Activated CD4-positive, alpha-beta T cell treated with anti-CD3 and anti-CD28 coated beads for 36 hours (primary cell): ENCODE measurements at regions of chr17 and their contacts with region 1.

Region 1: DNA sequence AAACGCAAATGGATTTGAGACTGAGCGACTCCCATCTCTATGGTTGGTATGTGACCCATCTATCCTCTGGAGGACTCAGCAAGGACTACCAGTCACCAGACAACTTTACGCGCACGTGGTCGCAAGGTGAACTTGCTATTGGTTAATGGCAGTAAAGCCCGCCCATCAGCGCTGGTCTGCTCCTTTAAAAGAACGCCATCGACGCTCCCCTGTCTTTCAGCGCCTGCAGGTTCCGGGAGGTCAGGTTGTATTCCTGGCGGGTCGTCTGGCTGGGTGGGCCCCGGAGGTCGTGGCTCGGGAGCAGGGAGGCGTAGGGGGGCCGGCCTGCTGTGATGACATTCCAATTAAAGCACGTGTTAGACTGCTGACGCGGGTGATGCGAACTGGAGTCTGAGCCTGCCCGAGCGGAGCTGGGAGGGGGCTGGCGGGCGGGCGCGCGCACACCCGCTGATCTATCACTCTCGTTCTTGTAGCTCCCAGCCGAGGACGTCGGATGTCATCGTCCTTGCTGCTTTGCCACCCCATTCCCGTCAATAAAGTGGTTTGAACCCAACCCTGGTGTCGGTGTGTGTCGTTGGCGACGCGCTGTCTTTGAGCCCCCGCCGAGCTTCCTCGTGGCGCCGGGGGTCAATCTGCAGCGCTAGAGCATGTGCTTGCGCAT is 15.9 kb upstream of the ERN1 start:
- DNase-seq: peak; percentile 97
- ATAC-seq: peak; percentile 96
- H3K4me3 Mint-ChIP-seq: no peak overlapping the region
- H3K27ac Mint-ChIP-seq: no peak overlapping the region
- H3K4me1 Mint-ChIP-seq: peaks cover 24% of the 10 kb centered on the region
- H3K27me3 Mint-ChIP-seq: no peaks in the 10 kb centered on the region

Region 2: DNA sequence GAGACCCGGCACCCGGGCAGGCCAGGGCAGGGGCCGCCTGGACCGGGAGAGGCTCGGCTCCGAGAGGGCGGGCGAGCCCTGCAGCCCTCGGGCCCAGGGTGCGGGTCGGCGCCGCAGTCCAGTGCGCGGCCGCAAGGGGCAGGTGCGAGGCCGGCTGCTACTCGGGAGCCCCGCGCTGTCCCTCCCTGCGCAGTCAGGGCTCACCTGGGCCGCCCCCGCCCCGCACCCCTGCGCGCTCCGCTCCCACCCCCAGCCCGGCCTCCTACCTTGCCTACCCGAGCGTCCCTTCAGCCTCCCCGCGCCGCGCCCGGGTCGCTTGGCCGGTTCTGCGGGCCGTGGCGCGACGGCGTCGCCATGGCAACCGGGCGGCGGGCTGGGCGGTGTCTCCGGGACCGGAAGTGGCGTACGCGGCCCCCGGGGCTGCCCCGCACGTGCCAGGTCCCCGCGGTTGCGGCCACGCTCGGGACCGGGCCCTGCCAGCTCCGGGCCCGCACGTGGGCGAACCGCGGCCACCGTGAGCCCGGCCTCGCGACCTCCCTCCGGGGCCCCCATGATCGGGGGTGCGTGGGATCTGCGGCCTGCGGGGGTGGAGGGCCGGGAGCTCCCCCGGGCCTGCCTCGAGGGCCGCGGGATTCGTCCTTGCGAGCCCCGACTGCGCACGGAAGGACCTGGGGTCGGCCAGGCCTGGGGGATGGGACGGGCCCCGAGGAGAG is 699.8 kb before region 1 on chr17 and contains the start of gene CYB561:
- CTCF ChIA-PET with region 1: no interaction called
- POLR2A ChIA-PET with region 1: no interaction called
- intact Hi-C with region 1: loop called in 1 of 2 experiments (anchors 10 kb)
- DNase-seq: peak; percentile 81
- ATAC-seq: peak; percentile 69
- H3K4me3 Mint-ChIP-seq: peak within 1 kb of the TSS; percentile 60
- H3K27ac Mint-ChIP-seq: peak within 1 kb of the TSS; percentile 72
- H3K4me1 Mint-ChIP-seq: peaks cover 23% of the 10 kb centered on the region
- H3K27me3 Mint-ChIP-seq: peaks cover 3% of the 10 kb centered on the region
- total RNA-seq, gene CYB561: 2.5 to 3.0 TPM

Region 3: GRCh38 chr17:63773381-63774140 is 372.3 kb before region 1 on chr17 and contains the start of gene CCDC47:
- CTCF ChIA-PET with region 1: no interaction called
- POLR2A ChIA-PET with region 1: no interaction called
- intact Hi-C with region 1: loop called in 1 of 2 experiments (anchors 5 kb)
- DNase-seq: peak; percentile 99
- ATAC-seq: peak; percentile 83
- H3K4me3 Mint-ChIP-seq: peak within 1 kb of the TSS; percentile 98
- H3K27ac Mint-ChIP-seq: peak within 1 kb of the TSS; percentile 97
- H3K4me1 Mint-ChIP-seq: peaks cover 57% of the 10 kb centered on the region
- H3K27me3 Mint-ChIP-seq: no peaks in the 10 kb centered on the region
- total RNA-seq, gene CCDC47: 76.9 to 82.3 TPM

Region 4: DNA sequence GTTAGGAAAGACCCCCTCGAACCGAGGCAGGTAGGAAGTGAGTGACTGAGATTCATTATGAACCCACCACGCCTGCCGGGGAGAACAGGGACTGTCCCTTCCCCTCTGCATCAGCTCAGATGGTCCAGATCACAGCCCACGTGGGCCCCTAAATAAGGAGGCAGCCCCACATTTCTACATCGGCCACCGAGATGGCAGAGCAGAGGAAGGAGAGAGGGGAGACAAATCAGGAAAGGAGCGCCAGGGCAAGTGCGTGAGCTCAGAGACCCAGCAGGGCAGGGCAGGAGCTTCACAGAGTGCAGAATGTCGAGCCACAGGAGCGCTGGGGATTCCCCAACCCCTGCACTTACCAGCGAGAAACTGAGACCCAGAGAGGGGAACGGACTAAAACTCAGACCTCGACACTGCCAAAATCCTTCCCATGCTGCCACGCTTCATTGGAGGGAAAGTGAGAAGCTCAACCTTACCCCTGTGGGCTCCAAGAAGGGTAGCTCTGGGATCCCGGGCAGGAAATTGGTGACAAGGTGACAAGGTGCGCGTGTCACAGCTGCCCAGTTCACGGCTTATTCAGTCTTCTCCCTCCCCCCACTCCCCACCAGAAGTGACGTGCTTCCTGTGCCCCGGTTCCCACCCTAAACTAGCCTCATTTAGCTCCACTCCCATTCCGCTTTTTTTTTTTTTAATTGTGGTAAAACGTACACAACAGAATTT is 125.7 kb before region 1 on chr17 and contains the start of gene ICAM2:
- CTCF ChIA-PET with region 1: interaction called, 6 read pairs
- POLR2A ChIA-PET with region 1: interaction called, 12 read pairs
- intact Hi-C with region 1: loop called in 1 of 2 experiments (anchors 2 kb)
- DNase-seq: peak; percentile 92
- ATAC-seq: peak; percentile 73
- H3K4me3 Mint-ChIP-seq: peak within 1 kb of the TSS; percentile 84
- H3K27ac Mint-ChIP-seq: peak within 1 kb of the TSS; percentile 97
- H3K4me1 Mint-ChIP-seq: peaks cover 68% of the 10 kb centered on the region
- H3K27me3 Mint-ChIP-seq: no peaks in the 10 kb centered on the region
- total RNA-seq, gene ICAM2: 46.6 to 49.0 TPM

Region 5: GRCh38 chr17:64051153-64051552 is 94.7 kb before region 1 on chr17:
- CTCF ChIA-PET with region 1: no interaction called
- POLR2A ChIA-PET with region 1: no interaction called
- intact Hi-C with region 1: no loop called
- DNase-seq: no peak
- ATAC-seq: peak; percentile 96
- H3K4me3 Mint-ChIP-seq: no peak overlapping the region
- H3K27ac Mint-ChIP-seq: peak overlapping the region; percentile 71
- H3K4me1 Mint-ChIP-seq: peaks cover 27% of the 10 kb centered on the region
- H3K27me3 Mint-ChIP-seq: no peaks in the 10 kb centered on the region

Region 6: DNA sequence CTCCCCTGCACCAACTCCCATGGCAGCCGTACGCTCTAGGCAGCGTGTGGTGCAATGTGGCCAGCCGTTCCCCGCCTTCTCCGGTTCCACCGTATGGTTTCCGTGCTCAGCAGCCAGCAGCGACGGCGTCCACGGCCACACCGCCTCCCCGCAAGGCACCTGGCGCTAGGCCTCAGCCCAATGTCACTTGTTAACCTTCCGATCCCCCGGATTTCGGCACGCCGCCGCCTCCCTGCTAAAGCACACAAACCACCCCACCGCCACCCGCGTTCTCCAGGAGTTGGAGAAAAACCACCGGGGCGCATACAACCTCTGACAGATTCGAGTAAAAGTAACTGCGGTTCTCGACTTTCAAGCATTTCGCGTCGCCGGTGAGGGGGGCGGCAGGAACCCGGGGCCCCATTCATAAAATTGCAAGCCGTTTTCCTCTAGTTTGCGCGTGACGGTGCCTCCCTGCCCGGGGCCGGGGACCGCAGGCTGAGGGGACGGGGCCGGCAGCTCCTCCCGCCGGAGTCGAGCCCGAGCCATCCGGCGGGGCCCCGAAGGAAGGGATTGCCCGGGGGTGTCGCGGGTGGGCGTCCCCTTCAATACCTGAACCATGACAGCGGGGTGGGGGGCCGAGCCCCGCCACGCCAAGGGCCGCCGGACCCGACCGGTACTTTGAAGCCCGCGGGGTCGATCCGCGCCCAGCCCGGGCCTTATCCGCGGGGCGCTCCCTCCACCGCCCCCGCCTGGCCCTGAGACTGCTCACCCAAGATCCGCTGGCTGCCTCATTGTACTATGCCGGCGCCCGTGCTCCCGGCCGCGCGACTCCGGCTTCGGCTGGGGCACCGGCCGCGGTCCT is 116.8 kb after region 1 on chr17 and contains the start of gene TEX2:
- CTCF ChIA-PET with region 1: interaction called, 4 read pairs
- POLR2A ChIA-PET with region 1: interaction called, 12 read pairs
- intact Hi-C with region 1: loop called (anchors 1 kb)
- DNase-seq: peak; percentile 78
- ATAC-seq: peak; percentile 27
- H3K4me3 Mint-ChIP-seq: peak within 1 kb of the TSS; percentile 96
- H3K27ac Mint-ChIP-seq: peak within 1 kb of the TSS; percentile 92
- H3K4me1 Mint-ChIP-seq: peaks cover 36% of the 10 kb centered on the region
- H3K27me3 Mint-ChIP-seq: no peaks in the 10 kb centered on the region
- total RNA-seq, gene TEX2: 15.2 to 15.8 TPM

Region 7: GRCh38 chr17:64496786-64497564 is 351.1 kb after region 1 on chr17 and contains the start of gene POLG2:
- CTCF ChIA-PET with region 1: no interaction called
- POLR2A ChIA-PET with region 1: no interaction called
- intact Hi-C with region 1: loop called (anchors 2 to 5 kb)
- DNase-seq: peak; percentile 97
- ATAC-seq: peak; percentile 86
- H3K4me3 Mint-ChIP-seq: peak within 1 kb of the TSS; percentile 98
- H3K27ac Mint-ChIP-seq: peak within 1 kb of the TSS; percentile 98
- H3K4me1 Mint-ChIP-seq: peaks cover 68% of the 10 kb centered on the region
- H3K27me3 Mint-ChIP-seq: no peaks in the 10 kb centered on the region
- total RNA-seq, gene POLG2: 26.9 to 30.2 TPM